GM10248 (cell line): ENCODE measurements at regions of chr19 and their contacts with region 1.

Region 1: GRCh38 chr19:45130888-45131615 is 29.7 kb downstream of the NKPD1 start:
- DNase-seq: no peak
- CTCF ChIP-seq: peak; percentile 44

Region 2: GRCh38 chr19:45001087-45001739 is 129.8 kb before region 1 on chr19 and contains the start of gene RELB:
- CTCF ChIA-PET with region 1: no interaction called
- POLR2A ChIA-PET with region 1: no interaction called
- DNase-seq: peak; percentile 98
- CTCF ChIP-seq: no peak

Region 3: DNA sequence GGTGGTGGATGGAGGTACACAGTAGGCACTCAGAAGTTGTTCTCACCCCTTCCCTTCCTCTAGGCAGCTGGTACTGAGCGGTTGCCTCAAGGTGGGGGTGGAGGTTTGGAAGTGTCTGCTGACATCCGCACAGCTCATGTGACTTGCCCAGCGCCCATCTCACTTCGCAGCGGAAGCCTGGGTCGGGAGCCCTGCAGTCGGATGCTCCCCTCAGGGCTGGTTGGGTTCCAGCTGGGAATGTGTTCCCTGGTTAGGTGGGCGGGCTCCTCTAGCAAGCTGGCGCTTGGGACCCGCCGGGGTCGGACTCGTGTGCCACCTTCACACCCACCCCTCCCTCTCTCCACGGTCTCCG is 27.9 kb before region 1 on chr19:
- CTCF ChIA-PET with region 1: interaction called, 11 read pairs
- POLR2A ChIA-PET with region 1: no interaction called
- DNase-seq: no peak
- CTCF ChIP-seq: peak; percentile 30